Activated B cell treated with CpG ODN at 0.5 μM for 24 hours (primary cell): ENCODE measurements at regions of chr5 and their contacts with region 1.

Region 1: GRCh38 chr5:163459922-163460766 is at the starts of genes HMMR and NUDCD2:
- DNase-seq: peak; percentile 96
- ATAC-seq: peak; percentile 87
- H3K4me3 Mint-ChIP-seq: peak within 1 kb of the TSS; percentile 97
- H3K27ac Mint-ChIP-seq: peak within 1 kb of the TSS; percentile 100
- H3K4me1 Mint-ChIP-seq: peaks cover 42% of the 10 kb centered on the region
- H3K27me3 Mint-ChIP-seq: no peaks in the 10 kb centered on the region
- CTCF ChIP-seq: no peak
- total RNA-seq, gene HMMR: 2.8 and 3.3 TPM in 2 replicates
- total RNA-seq, gene NUDCD2: 23.5 and 28.1 TPM in 2 replicates

Region 2: DNA sequence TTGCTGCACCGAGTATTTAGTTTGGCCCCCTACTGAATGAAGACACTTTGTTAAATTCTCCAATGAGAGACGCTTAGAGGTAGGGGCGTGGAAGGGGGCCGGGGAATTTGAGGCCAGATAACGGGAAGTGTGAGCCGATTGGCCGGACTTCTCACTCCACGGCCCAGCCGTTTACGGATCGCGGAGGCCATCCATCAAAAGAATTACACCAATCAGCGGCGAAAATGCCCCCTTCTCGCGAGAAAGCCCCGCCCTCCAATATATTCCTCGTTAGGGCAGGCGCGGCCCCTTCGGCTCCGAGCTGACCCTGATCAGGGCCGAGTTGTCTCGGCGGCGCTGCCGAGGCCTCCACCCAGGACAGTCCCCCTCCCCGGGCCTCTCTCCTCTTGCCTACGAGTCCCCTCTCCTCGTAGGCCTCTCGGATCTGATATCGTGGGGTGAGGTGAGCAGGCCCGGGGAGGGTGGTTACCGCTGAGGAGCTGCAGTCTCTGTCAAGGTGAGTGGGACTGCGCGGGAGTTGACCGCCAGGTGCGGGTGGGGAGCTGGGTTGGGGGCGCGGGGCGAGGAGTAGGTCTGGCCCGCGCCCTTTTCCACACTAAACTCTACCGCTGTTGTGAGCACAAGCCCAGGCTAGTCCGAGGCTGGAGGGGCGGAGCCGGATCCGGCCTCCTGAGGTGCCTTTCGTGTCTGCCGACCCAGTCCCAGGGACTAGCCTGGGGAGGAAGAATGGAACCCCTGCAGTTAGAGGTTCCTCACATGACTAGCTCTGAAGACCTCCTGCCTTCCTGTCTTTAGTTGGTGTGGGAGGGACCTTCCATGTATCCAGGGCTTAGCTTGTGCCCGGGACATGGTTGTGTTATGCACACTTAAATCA is 22.6 kb before region 1 on chr5 and contains the start of gene CCNG1:
- CTCF ChIA-PET with region 1: interaction called, 7 read pairs
- POLR2A ChIA-PET with region 1: interaction called, 91 read pairs
- intact Hi-C with region 1: loop called (anchors 1 kb)
- DNase-seq: peak; percentile 76
- ATAC-seq: peak; percentile 97
- H3K4me3 Mint-ChIP-seq: peak within 1 kb of the TSS; percentile 89
- H3K27ac Mint-ChIP-seq: peak within 1 kb of the TSS; percentile 89
- H3K4me1 Mint-ChIP-seq: peaks cover 34% of the 10 kb centered on the region
- H3K27me3 Mint-ChIP-seq: no peaks in the 10 kb centered on the region
- CTCF ChIP-seq: no peak
- total RNA-seq, gene CCNG1: 71.2 and 73.0 TPM in 2 replicates

Region 3: DNA sequence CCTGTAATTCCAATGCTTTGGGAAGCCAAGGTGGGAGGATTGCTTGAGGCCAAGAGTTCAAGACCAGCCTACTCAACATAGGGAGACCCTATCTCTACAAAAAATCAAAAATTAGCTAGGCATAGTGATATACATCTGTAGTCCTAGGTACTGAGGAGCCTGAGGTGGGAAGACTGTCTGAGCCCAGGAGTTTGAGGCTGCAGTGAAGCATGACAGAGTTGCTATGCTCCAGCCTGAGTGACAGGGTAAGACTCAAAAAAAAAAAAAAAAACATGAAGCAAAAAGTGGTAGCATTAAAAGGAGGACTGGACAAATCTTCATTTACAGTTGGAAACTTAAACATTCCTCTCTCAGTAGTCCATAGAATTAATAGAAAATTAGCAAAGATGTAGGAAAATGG is 13.0 kb before region 1 on chr5:
- CTCF ChIA-PET with region 1: no interaction called
- POLR2A ChIA-PET with region 1: interaction called, 20 read pairs
- intact Hi-C with region 1: no loop called
- DNase-seq: no peak
- ATAC-seq: no peak
- H3K4me3 Mint-ChIP-seq: no peak overlapping the region
- H3K27ac Mint-ChIP-seq: no peak overlapping the region
- H3K4me1 Mint-ChIP-seq: no peaks in the 10 kb centered on the region
- H3K27me3 Mint-ChIP-seq: no peaks in the 10 kb centered on the region
- CTCF ChIP-seq: no peak

Region 4: DNA sequence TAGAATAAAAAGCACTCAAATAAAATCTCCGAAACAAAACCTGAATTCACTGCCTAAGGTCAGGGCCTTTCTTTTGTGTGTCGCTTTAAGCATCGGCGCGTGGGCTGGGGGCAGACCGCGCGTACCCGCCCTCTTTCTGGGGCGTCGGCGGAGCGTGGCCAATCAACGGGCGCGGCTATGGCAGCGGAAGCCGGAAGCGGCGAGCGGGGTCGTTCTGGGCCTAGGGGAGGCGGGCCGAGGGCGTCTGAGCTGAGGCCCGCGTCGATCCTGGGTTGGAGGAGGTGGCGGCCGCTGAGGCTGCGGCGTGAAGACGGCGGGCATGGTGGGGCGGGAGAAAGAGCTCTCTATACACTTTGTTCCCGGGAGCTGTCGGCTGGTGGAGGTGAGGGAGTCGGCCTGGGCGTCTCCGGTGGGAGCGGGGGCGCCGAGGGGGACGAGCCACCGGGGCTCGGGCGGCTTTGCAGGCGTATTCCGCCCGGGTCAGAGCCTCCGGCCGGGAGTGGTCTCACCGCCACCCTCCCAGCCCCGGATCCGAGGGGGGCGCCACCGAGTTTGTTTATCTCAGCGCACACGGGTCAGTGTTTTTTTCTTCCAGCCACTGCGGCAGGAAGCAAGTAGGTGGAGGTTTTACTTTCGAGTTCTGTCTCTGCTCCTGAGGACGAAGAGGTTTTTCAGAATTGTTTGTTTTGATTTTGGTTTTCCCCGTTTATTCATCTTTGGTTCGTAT is 45.4 kb after region 1 on chr5 and contains the start of gene MAT2B:
- CTCF ChIA-PET with region 1: interaction called, 13 read pairs
- POLR2A ChIA-PET with region 1: interaction called, 159 read pairs
- intact Hi-C with region 1: loop called (anchors 1 kb)
- DNase-seq: peak; percentile 92
- ATAC-seq: peak; percentile 90
- H3K4me3 Mint-ChIP-seq: peak within 1 kb of the TSS; percentile 95
- H3K27ac Mint-ChIP-seq: peak within 1 kb of the TSS; percentile 97
- H3K4me1 Mint-ChIP-seq: peaks cover 69% of the 10 kb centered on the region
- H3K27me3 Mint-ChIP-seq: no peaks in the 10 kb centered on the region
- CTCF ChIP-seq: no peak
- total RNA-seq, gene MAT2B: 74.7 and 76.4 TPM in 2 replicates

Region 5: DNA sequence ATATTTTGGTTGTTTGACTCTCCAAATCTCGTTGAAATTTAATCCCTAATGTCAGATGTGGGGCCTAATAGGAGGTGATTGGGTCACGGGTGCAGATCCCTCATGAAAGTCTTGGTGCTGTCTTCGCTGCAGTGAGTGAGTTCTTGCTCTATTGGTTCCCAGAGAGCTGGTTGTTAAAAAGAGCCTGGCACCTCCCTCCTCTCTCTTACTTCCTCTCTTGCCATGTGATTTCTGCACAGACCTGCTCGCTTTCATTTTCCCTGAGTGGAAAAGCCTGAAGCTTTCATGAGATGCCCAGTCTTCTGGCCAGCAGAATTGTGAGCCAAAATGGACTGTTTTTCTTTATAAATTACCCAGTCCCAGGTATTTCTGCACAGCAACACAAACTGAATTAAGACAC is 266.9 kb after region 1 on chr5:
- CTCF ChIA-PET with region 1: no interaction called
- POLR2A ChIA-PET with region 1: no interaction called
- intact Hi-C with region 1: loop called (anchors 10 kb)
- DNase-seq: no peak
- ATAC-seq: peak; percentile 96
- H3K4me3 Mint-ChIP-seq: peak overlapping the region; percentile 65
- H3K27ac Mint-ChIP-seq: peak overlapping the region; percentile 72
- H3K4me1 Mint-ChIP-seq: peaks cover 36% of the 10 kb centered on the region
- H3K27me3 Mint-ChIP-seq: no peaks in the 10 kb centered on the region
- CTCF ChIP-seq: no peak